Activated CD4-positive, alpha-beta memory T cell treated with anti-CD3 and anti-CD28 coated beads for 36 hours (primary cell): ENCODE measurements at regions of chr6 and their contacts with region 1.

Region 1: GRCh38 chr6:6856538-6857523 is 250.9 kb upstream of the RREB1 start:
- DNase-seq: peak; percentile 82
- H3K4me3 Mint-ChIP-seq: peak overlapping the region; percentile 57
- H3K27ac Mint-ChIP-seq: peak overlapping the region; percentile 80
- H3K4me1 Mint-ChIP-seq: peaks cover 28% of the 10 kb centered on the region
- H3K27me3 Mint-ChIP-seq: no peaks in the 10 kb centered on the region

Region 2: GRCh38 chr6:6635869-6636268 is 221.0 kb before region 1 on chr6:
- CTCF ChIA-PET with region 1: no interaction called
- POLR2A ChIA-PET with region 1: no interaction called
- intact Hi-C with region 1: no loop called
- DNase-seq: no peak
- H3K4me3 Mint-ChIP-seq: no peak overlapping the region
- H3K27ac Mint-ChIP-seq: no peak overlapping the region
- H3K4me1 Mint-ChIP-seq: peaks cover 12% of the 10 kb centered on the region
- H3K27me3 Mint-ChIP-seq: no peaks in the 10 kb centered on the region

Region 3: GRCh38 chr6:6798448-6798860 is 58.4 kb before region 1 on chr6:
- CTCF ChIA-PET with region 1: no interaction called
- POLR2A ChIA-PET with region 1: no interaction called
- intact Hi-C with region 1: loop called (anchors 2 kb)
- DNase-seq: peak; percentile 68
- H3K4me3 Mint-ChIP-seq: no peak overlapping the region
- H3K27ac Mint-ChIP-seq: peak overlapping the region; percentile 78
- H3K4me1 Mint-ChIP-seq: peaks cover 40% of the 10 kb centered on the region
- H3K27me3 Mint-ChIP-seq: peaks cover 6% of the 10 kb centered on the region

Region 4: DNA sequence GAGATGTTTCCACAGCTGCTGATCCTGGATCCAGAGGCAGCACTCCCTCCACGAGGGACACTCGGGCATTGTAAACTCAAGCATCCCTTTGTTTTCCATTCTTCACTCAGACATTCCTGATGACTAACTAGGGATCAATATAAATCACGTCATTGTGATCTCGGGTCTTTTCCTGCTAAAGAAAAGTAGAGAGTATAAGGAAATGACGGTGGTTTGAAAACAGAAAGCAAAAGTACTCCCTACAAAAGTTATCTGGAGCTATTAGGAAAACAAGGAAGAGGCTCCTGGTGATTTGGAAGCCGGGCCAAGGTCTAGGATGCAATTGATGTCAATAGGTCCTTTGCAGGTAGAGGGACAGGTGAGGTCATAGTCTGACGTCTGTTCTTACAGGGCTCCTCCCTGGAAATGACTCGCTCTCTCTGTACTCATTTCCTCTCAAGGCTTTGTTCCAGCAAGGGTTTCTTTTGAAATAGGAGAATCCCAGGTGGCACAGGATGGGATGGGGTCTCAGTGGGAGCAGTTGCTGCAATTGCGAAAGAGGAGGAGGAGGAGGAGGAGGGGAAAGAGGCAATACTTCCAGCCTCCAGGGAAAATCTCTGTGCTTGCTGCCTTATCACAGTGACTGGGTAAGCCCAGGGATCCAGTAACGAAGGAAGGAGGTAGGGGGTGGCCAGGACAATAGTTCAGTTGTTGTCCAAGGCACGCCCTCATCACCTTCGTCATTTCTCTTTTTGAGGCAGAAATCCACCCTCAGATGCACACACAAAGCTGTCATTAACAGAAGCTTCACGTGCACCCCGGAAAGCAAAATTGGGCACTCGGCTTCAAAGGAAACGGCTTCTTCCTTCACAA is 45.5 kb before region 1 on chr6:
- CTCF ChIA-PET with region 1: no interaction called
- POLR2A ChIA-PET with region 1: no interaction called
- intact Hi-C with region 1: loop called (anchors 1 kb)
- DNase-seq: peak; percentile 54
- H3K4me3 Mint-ChIP-seq: peak overlapping the region; percentile 51
- H3K27ac Mint-ChIP-seq: no peak overlapping the region
- H3K4me1 Mint-ChIP-seq: peaks cover 18% of the 10 kb centered on the region
- H3K27me3 Mint-ChIP-seq: peaks cover 5% of the 10 kb centered on the region

Region 5: DNA sequence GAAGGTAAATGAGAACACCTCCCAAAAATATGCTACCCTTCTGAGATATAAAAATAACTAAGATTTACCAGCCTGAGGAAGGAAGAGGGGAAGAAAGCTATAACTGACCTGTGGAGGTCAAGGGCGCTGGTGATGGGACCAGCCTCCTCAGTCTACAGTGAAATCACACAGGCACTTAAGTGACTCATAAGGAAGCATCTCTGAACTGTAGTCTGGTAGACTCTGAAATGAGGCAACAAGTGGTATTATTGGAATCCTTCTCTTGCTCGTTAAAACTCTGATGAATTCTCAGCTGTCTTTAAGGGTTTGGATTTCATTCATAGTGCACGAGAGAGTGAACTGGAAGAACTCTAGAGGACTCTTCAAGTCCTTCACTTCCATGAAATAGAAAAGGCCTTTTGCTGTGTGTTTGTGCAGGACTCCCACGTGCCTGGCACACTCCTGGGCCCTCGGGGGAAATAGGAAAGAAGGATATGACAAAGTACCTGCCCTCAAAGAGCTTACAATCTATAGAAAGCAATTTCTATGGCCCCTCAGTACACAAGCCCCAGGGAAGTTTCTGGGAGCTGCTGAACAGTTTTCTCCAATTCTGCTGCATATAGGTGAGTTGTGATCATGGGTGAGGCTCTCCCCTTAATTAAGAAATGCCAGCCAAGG is 19.1 kb after region 1 on chr6:
- CTCF ChIA-PET with region 1: no interaction called
- POLR2A ChIA-PET with region 1: no interaction called
- intact Hi-C with region 1: loop called (anchors 2 kb)
- DNase-seq: no peak
- H3K4me3 Mint-ChIP-seq: no peak overlapping the region
- H3K27ac Mint-ChIP-seq: no peak overlapping the region
- H3K4me1 Mint-ChIP-seq: no peaks in the 10 kb centered on the region
- H3K27me3 Mint-ChIP-seq: peaks cover 8% of the 10 kb centered on the region

Region 6: GRCh38 chr6:7073821-7074525 is 217.1 kb after region 1 on chr6:
- CTCF ChIA-PET with region 1: no interaction called
- POLR2A ChIA-PET with region 1: no interaction called
- intact Hi-C with region 1: loop called (anchors 5 kb)
- DNase-seq: peak; percentile 87
- H3K4me3 Mint-ChIP-seq: peak overlapping the region; percentile 8
- H3K27ac Mint-ChIP-seq: no peak overlapping the region
- H3K4me1 Mint-ChIP-seq: peaks cover 14% of the 10 kb centered on the region
- H3K27me3 Mint-ChIP-seq: peaks cover 19% of the 10 kb centered on the region

Region 7: GRCh38 chr6:7086488-7086887 is 229.7 kb after region 1 on chr6:
- CTCF ChIA-PET with region 1: no interaction called
- POLR2A ChIA-PET with region 1: no interaction called
- intact Hi-C with region 1: loop called (anchors 2 kb)
- DNase-seq: peak; percentile 57
- H3K4me3 Mint-ChIP-seq: peak overlapping the region; percentile 21
- H3K27ac Mint-ChIP-seq: no peak overlapping the region
- H3K4me1 Mint-ChIP-seq: peaks cover 28% of the 10 kb centered on the region
- H3K27me3 Mint-ChIP-seq: peaks cover 5% of the 10 kb centered on the region